ENCODE measurements at regions of chr3 and their contacts with region 1.

Region 1: DNA sequence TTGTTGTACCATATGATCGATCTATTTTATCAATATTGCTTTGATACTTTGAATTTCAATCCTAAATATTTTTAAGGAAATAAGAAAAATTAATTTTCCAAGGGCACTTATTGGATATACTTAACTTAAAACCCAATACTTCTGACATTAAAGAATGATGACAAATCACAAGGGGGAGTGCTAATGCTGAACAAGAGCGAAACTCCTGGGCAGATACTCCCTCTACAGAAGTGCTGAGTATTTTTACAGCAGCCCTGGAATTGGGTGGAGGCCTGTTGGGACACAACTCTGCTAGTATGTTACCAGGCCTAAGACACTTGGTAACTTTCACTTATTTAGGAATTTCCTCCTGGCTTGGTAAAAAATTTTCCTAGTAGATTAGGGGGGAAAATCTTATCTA is 46.2 kb downstream of the DENND6A start:
- DNase-seq: no peak
- H3K4me3 Mint-ChIP-seq: no peak overlapping the region
- H3K27ac Mint-ChIP-seq: peak overlapping the region; percentile 22
- H3K4me1 Mint-ChIP-seq: peaks cover 15% of the 10 kb centered on the region
- H3K27me3 Mint-ChIP-seq: no peaks in the 10 kb centered on the region

Region 2: GRCh38 chr3:57627976-57628375 is 18.7 kb before region 1 on chr3:
- CTCF ChIA-PET with region 1: no interaction called
- intact Hi-C with region 1: no loop called
- DNase-seq: no peak
- H3K4me3 Mint-ChIP-seq: no peak overlapping the region
- H3K27ac Mint-ChIP-seq: no peak overlapping the region
- H3K4me1 Mint-ChIP-seq: no peaks in the 10 kb centered on the region
- H3K27me3 Mint-ChIP-seq: no peaks in the 10 kb centered on the region

Region 3: GRCh38 chr3:57826245-57826951 is 179.7 kb after region 1 on chr3:
- CTCF ChIA-PET with region 1: no interaction called
- intact Hi-C with region 1: loop called (anchors 2 kb)
- DNase-seq: no peak
- H3K4me3 Mint-ChIP-seq: no peak overlapping the region
- H3K27ac Mint-ChIP-seq: no peak overlapping the region
- H3K4me1 Mint-ChIP-seq: peaks cover 19% of the 10 kb centered on the region
- H3K27me3 Mint-ChIP-seq: no peaks in the 10 kb centered on the region

Region 4: GRCh38 chr3:57852896-57853295 is 206.2 kb after region 1 on chr3:
- CTCF ChIA-PET with region 1: no interaction called
- intact Hi-C with region 1: loop called (anchors 2 kb)
- DNase-seq: no peak
- H3K4me3 Mint-ChIP-seq: no peak overlapping the region
- H3K27ac Mint-ChIP-seq: no peak overlapping the region
- H3K4me1 Mint-ChIP-seq: no peaks in the 10 kb centered on the region
- H3K27me3 Mint-ChIP-seq: no peaks in the 10 kb centered on the region

Measured in activated naive CD4-positive, alpha-beta T cell treated with anti-CD3 and anti-CD28 coated beads for 36 hours (primary cell).